K562 (cell line): ENCODE measurements at regions of chr6 and their contacts with region 1.

Region 1: DNA sequence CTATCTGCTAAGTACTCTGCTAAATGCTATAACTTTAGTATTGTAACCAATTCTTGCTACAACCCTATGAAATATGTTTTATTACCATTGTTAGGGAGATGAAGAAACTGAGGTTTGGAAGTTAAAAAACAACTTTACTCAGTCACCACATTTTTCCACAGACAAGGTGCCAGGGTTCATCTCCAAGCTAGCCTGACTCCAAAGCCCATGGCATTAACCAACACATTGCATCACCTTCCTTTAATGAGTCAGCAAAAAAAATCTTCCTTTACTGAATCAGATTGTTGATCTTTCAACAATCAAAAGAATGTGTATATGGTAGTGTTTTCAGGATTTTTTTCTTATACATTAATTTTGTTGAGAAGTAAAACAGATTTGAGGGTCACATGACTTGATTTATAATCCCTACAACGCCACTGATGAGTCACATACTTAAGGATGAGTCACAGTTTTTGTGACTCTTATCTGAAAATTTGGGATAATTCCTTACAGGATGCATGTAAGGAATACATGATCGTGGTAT is 41.5 kb downstream of the MAN1A1 start:
- DNase-seq: peak in 3 of 4 experiments; percentile 26 to 60 (median 34)
- ATAC-seq: no peak
- H3K4me3 ChIP-seq: no peak overlapping the region
- H3K27ac ChIP-seq: peak overlapping the region; percentile 91
- H3K4me1 ChIP-seq: peaks cover 30 to 86% of the 10 kb centered on the region in 2 experiments
- H3K27me3 ChIP-seq: no peaks in the 10 kb centered on the region
- CTCF ChIP-seq: no peak
- EP300 ChIP-seq: peak; percentile 84
- POLR2A ChIP-seq: no peak
- RAD21 ChIP-seq: no peak

Region 2: GRCh38 chr6:119284861-119285521 is 23.1 kb before region 1 on chr6:
- CTCF ChIA-PET with region 1: no interaction called
- POLR2A ChIA-PET with region 1: interaction called, 3 read pairs
- in situ Hi-C with region 1: no loop called
- intact Hi-C with region 1: loop called (anchors 2 kb)
- DNase-seq: peak; percentile 31 to 65 (median 35)
- ATAC-seq: peak; percentile 80
- H3K4me3 ChIP-seq: no peak overlapping the region
- H3K27ac ChIP-seq: no peak overlapping the region
- H3K4me1 ChIP-seq: peaks cover 0 to 24% of the 10 kb centered on the region in 2 experiments; a peak in 2 of 5 replicates
- H3K27me3 ChIP-seq: no peaks in the 10 kb centered on the region
- CTCF ChIP-seq: peak; percentile 38 to 57 (median 50); a peak in 5 of 6 replicates
- EP300 ChIP-seq: no peak
- POLR2A ChIP-seq: no peak
- RAD21 ChIP-seq: peak in 1 of 2 experiments; percentile 22; a peak in 1 of 4 replicates